Heart right ventricle (tissue), 16 donors: ENCODE measurements at regions of chr20 and their contacts with region 1.

Region 1: DNA sequence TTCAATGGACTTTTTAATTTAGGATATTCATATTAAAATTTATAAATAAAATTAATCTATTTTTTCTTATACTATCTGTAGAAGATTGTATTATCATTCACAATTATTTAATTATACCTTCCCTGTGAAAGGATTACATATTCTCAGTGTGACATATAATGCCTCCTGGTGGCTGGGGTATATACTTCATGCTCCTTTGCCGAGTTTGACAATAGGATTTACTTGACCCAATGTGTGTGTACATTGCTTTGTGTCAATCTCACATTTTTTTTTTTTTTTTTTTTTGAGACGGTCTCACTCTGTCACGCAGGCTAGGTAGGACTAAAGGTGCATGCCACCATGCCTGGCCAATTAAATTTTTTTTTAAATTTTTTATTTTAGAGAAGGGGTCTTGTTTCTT is 230.0 kb upstream of the CHD6 start:
- DNase-seq: no peak
- ATAC-seq: no peak
- H3K4me3 ChIP-seq: no peak overlapping the region
- H3K27ac ChIP-seq: no peak overlapping the region
- H3K4me1 ChIP-seq: no peaks in the 10 kb centered on the region
- H3K27me3 ChIP-seq: peaks cover 0 to 17% (median 0%) of the 10 kb centered on the region in 7 donors
- CTCF ChIP-seq: no peak

Region 2: GRCh38 chr20:41927189-41927588 is 79.0 kb after region 1 on chr20:
- intact Hi-C with region 1: loop called in 1 of 10 experiments (anchors 10 kb)
- DNase-seq: no peak
- ATAC-seq: no peak
- H3K4me3 ChIP-seq: no peak overlapping the region
- H3K27ac ChIP-seq: no peak overlapping the region
- H3K4me1 ChIP-seq: no peaks in the 10 kb centered on the region
- H3K27me3 ChIP-seq: peaks cover 0 to 44% (median 19%) of the 10 kb centered on the region in 7 donors
- CTCF ChIP-seq: no peak